GM12878 (cell line): ENCODE measurements at regions of chr1 and their contacts with region 1.

Region 1: GRCh38 chr1:66396212-66396890 is 137.6 kb upstream of the SGIP1 start:
- DNase-seq: peak; percentile 71
- ATAC-seq: peak; percentile 76
- H3K4me3 ChIP-seq: no peak overlapping the region
- H3K27ac ChIP-seq: peak overlapping the region; percentile 80
- H3K4me1 ChIP-seq: peaks cover 75% of the 10 kb centered on the region
- H3K27me3 ChIP-seq: no peaks in the 10 kb centered on the region
- CTCF ChIP-seq: no peak
- EP300 ChIP-seq: peak in 1 of 2 experiments; percentile 52; a peak in 2 of 4 replicates
- POLR2A ChIP-seq: no peak
- RAD21 ChIP-seq: no peak; the same call in 1 of the 2 replicates

Region 2: DNA sequence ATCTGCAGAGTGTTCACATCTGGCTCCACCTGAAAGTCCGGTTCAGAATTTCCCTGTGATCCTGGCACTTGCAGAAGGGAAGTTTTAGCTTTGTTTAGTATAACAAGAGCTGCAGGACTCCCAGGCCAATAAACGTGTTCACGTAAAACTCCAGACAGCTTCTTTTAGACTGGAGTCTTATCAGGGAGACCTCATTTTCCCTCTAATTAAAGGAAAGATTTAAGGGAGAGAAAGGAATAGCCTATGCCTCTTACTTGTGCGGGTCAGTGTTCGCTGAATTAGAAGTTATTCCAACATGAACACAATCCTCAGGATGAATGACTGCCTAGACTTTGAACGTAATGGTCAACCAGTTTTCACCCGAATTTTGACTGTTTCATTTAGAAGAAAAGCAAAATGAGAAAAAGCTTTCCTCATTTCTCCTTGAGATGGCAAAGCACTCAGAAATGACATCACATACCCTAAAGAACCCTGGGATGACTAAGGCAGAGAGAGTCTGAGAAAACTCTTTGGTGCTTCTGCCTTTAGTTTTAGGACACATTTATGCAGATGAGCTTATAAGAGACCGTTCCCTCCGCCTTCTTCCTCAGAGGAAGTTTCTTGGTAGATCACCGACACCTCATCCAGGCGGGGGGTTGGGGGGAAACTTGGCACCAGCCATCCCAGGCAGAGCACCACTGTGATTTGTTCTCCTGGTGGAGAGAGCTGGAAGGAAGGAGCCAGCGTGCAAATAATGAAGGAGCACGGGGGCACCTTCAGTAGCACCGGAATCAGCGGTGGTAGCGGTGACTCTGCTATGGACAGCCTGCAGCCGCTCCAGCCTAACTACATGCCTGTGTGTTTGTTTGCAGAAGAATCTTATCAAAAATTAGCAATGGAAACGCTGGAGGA is 64.4 kb before region 1 on chr1:
- CTCF ChIA-PET with region 1: interaction called, 3 read pairs
- POLR2A ChIA-PET with region 1: interaction called, 6 read pairs
- RAD21 ChIA-PET with region 1: interaction called, 10 read pairs
- SMC1A ChIA-PET with region 1: interaction called, 8 read pairs
- in situ Hi-C with region 1: no loop called
- intact Hi-C with region 1: loop called (anchors 2 kb)
- DNase-seq: no peak
- ATAC-seq: peak; percentile 13
- H3K4me3 ChIP-seq: peak overlapping the region; percentile 81
- H3K27ac ChIP-seq: peak overlapping the region; percentile 93
- H3K4me1 ChIP-seq: peaks cover 49% of the 10 kb centered on the region
- H3K27me3 ChIP-seq: no peaks in the 10 kb centered on the region
- CTCF ChIP-seq: no peak
- EP300 ChIP-seq: peak in 1 of 2 experiments; percentile 41; a peak in 1 of 4 replicates
- POLR2A ChIP-seq: peak; percentile 48; the same call in 1 of the 2 replicates
- RAD21 ChIP-seq: no peak

Region 3: DNA sequence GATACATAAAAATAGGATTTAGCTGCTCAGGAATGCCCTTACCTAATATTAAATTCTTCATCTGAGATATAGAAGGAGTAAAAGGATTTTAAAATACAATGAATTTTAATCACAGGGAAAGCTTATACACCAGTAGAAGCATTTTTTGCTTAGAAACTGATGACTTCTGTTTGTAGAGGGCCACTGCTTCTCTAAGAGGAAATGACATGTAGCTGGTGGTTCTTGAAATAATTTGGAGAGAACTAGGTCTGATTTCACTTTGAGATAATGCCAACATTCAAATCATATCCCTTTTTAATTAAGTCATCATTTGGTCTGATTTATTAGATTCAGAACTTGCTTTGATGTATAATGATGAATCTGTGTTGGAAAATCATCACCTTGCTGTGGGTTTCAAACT is 29.0 kb before region 1 on chr1:
- CTCF ChIA-PET with region 1: interaction called, 8 read pairs
- POLR2A ChIA-PET with region 1: interaction called, 10 read pairs
- RAD21 ChIA-PET with region 1: interaction called, 21 read pairs
- SMC1A ChIA-PET with region 1: interaction called, 21 read pairs
- in situ Hi-C with region 1: no loop called
- intact Hi-C with region 1: no loop called
- DNase-seq: no peak
- ATAC-seq: no peak
- H3K4me3 ChIP-seq: no peak overlapping the region
- H3K27ac ChIP-seq: no peak overlapping the region
- H3K4me1 ChIP-seq: peaks cover 37% of the 10 kb centered on the region
- H3K27me3 ChIP-seq: no peaks in the 10 kb centered on the region
- CTCF ChIP-seq: no peak
- EP300 ChIP-seq: no peak
- POLR2A ChIP-seq: no peak
- RAD21 ChIP-seq: no peak

Region 4: GRCh38 chr1:66380452-66381212 is 15.7 kb before region 1 on chr1:
- CTCF ChIA-PET with region 1: interaction called, 32 read pairs
- POLR2A ChIA-PET with region 1: interaction called, 19 read pairs
- RAD21 ChIA-PET with region 1: interaction called, 74 read pairs
- SMC1A ChIA-PET with region 1: interaction called, 253 read pairs
- in situ Hi-C with region 1: no loop called
- intact Hi-C with region 1: loop called (anchors 1 kb)
- DNase-seq: peak; percentile 87
- ATAC-seq: peak; percentile 95
- H3K4me3 ChIP-seq: peak overlapping the region; percentile 55
- H3K27ac ChIP-seq: peak overlapping the region; percentile 83
- H3K4me1 ChIP-seq: peaks cover 39% of the 10 kb centered on the region
- H3K27me3 ChIP-seq: no peaks in the 10 kb centered on the region
- CTCF ChIP-seq: no peak
- EP300 ChIP-seq: peak; percentile 99
- POLR2A ChIP-seq: no peak
- RAD21 ChIP-seq: no peak

Region 5: GRCh38 chr1:66436378-66437145 is 40.2 kb after region 1 on chr1:
- CTCF ChIA-PET with region 1: interaction called, 8 read pairs
- POLR2A ChIA-PET with region 1: interaction called, 9 read pairs
- RAD21 ChIA-PET with region 1: interaction called, 31 read pairs
- SMC1A ChIA-PET with region 1: interaction called, 44 read pairs
- in situ Hi-C with region 1: loop called (anchors 5 kb)
- intact Hi-C with region 1: loop called (anchors 2 kb)
- DNase-seq: peak; percentile 44
- ATAC-seq: peak; percentile 85
- H3K4me3 ChIP-seq: no peak overlapping the region
- H3K27ac ChIP-seq: peak overlapping the region; percentile 7; the same call in 1 of the 2 replicates
- H3K4me1 ChIP-seq: peaks cover 31% of the 10 kb centered on the region
- H3K27me3 ChIP-seq: no peaks in the 10 kb centered on the region
- CTCF ChIP-seq: peak; percentile 27 to 56 (median 50); a peak in 5 of 6 replicates
- EP300 ChIP-seq: no peak
- POLR2A ChIP-seq: no peak
- RAD21 ChIP-seq: peak; percentile 58

Region 6: DNA sequence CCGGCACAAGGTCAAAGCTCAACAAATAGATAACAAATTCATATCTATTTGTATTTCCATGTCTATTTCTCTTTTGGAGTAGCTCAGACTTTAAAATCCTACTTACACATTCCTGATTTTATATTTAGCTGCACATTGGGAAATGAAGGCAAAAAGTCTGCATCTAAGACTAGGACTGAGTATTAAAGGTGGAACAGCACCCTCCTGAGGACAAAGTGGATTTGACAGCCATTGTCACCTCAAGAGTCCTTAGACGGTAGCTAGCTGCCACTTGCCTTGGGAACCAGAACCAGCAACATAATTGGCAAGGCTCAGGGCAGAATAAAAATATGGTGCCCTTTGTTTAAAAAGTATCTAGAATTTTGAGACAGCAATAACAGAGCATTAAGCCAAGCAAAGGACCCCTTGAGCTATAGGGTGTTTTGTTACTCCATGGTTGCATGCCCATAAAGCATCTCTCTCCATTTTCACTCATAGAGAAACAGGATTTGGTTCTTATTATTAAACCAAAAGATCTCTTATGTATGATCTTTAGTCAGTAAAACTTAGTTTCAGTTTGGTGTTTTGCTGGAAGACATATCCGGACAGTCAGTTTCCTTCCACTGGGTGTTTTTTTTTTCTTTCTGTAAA is 107.6 kb after region 1 on chr1:
- CTCF ChIA-PET with region 1: no interaction called
- POLR2A ChIA-PET with region 1: no interaction called
- RAD21 ChIA-PET with region 1: no interaction called
- SMC1A ChIA-PET with region 1: no interaction called
- in situ Hi-C with region 1: no loop called
- intact Hi-C with region 1: no loop called
- DNase-seq: no peak
- ATAC-seq: peak; percentile 89
- H3K4me3 ChIP-seq: no peak overlapping the region
- H3K27ac ChIP-seq: no peak overlapping the region
- H3K4me1 ChIP-seq: no peaks in the 10 kb centered on the region
- H3K27me3 ChIP-seq: 0 out of 4 replicates have a peak, but pooled peaks cover 0 to 1% of the 10 kb centered on the region in 2 experiments
- CTCF ChIP-seq: peak; percentile 57 to 69 (median 63)
- EP300 ChIP-seq: no peak
- POLR2A ChIP-seq: no peak
- RAD21 ChIP-seq: peak; percentile 56

Region 7: DNA sequence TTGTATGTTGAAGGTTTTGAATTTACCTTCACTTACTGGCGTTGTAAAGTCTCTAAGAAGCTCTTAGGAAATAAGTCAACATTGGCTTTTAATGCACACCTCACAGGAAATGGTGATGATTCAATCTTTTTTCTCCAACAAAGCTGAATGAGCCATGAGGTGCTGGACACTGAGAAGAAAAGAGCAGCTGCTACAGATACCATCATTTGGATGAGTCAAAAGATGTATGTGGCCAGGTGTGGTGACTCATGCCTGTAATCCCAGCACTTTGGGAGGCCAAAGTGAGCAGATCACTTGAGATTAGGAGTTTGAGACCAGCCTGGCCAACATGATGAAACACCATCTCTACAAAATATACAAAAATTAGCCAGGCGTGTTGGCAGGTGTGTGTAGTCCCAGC is 766.6 kb after region 1 on chr1:
- CTCF ChIA-PET with region 1: no interaction called
- POLR2A ChIA-PET with region 1: no interaction called
- RAD21 ChIA-PET with region 1: no interaction called
- SMC1A ChIA-PET with region 1: no interaction called
- in situ Hi-C with region 1: loop called (anchors 25 kb)
- intact Hi-C with region 1: loop called (anchors 10 kb)
- DNase-seq: no peak
- ATAC-seq: peak; percentile 53
- H3K4me3 ChIP-seq: no peak overlapping the region
- H3K27ac ChIP-seq: no peak overlapping the region
- H3K4me1 ChIP-seq: peaks cover 3% of the 10 kb centered on the region; the same call in 1 of the 2 replicates
- H3K27me3 ChIP-seq: no peaks in the 10 kb centered on the region
- CTCF ChIP-seq: no peak
- EP300 ChIP-seq: no peak; a peak in 1 of 4 replicates
- POLR2A ChIP-seq: no peak
- RAD21 ChIP-seq: no peak

Region 8: DNA sequence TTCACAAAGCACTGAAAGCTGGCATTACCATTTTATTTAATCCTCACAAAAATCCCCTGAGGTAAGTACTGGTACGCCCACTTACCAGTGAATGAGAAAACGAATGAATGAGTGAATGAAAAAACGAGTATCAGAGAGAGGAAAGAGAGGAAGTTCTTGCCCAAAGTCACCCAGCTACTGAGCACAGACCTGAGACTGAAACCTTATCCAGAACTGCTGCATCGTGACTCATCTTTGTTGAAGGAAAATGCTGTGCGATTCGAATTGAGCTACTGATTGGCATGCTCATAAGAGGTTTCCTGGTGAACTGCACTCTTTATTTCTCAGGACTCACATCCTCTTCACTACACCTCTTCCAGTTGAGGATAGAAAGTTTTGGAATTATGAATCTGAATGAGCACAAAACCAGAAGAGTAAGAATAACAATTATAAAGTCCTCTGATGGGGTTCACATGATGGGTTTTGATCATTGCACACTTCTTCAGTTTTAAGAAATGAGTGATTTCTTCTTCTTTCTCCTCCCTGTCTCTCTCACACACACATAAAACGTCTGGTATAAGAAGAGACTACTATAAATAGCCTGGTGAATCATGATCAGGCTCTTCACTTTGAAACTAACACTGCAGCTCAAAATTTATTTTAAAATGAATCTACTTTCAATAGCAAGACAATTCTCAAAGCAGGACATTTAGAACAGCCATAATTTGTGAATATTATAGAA is 943.4 kb after region 1 on chr1:
- CTCF ChIA-PET with region 1: no interaction called
- POLR2A ChIA-PET with region 1: no interaction called
- RAD21 ChIA-PET with region 1: no interaction called
- SMC1A ChIA-PET with region 1: no interaction called
- in situ Hi-C with region 1: no loop called
- intact Hi-C with region 1: loop called (anchors 10 kb)
- DNase-seq: peak; percentile 84
- ATAC-seq: peak; percentile 35
- H3K4me3 ChIP-seq: peak overlapping the region; percentile 20; the same call in 1 of the 2 replicates
- H3K27ac ChIP-seq: peak overlapping the region; percentile 87
- H3K4me1 ChIP-seq: peaks cover 71% of the 10 kb centered on the region
- H3K27me3 ChIP-seq: no peaks in the 10 kb centered on the region
- CTCF ChIP-seq: no peak
- EP300 ChIP-seq: no peak
- POLR2A ChIP-seq: no peak
- RAD21 ChIP-seq: no peak